GM10248 (cell line): ENCODE measurements at regions of chr17 and their contacts with region 1.

Region 1: GRCh38 chr17:4412933-4413831 is 20.6 kb upstream of the SPNS3 start:
- DNase-seq: peak; percentile 89
- CTCF ChIP-seq: peak; percentile 99

Region 2: GRCh38 chr17:4206962-4207361 is 206.2 kb before region 1 on chr17:
- CTCF ChIA-PET with region 1: interaction called, 248 read pairs
- POLR2A ChIA-PET with region 1: no interaction called
- DNase-seq: no peak
- CTCF ChIP-seq: no peak

Region 3: GRCh38 chr17:4387137-4387536 is 26.0 kb before region 1 on chr17:
- CTCF ChIA-PET with region 1: no interaction called
- POLR2A ChIA-PET with region 1: no interaction called
- DNase-seq: no peak
- CTCF ChIP-seq: no peak

Region 4: DNA sequence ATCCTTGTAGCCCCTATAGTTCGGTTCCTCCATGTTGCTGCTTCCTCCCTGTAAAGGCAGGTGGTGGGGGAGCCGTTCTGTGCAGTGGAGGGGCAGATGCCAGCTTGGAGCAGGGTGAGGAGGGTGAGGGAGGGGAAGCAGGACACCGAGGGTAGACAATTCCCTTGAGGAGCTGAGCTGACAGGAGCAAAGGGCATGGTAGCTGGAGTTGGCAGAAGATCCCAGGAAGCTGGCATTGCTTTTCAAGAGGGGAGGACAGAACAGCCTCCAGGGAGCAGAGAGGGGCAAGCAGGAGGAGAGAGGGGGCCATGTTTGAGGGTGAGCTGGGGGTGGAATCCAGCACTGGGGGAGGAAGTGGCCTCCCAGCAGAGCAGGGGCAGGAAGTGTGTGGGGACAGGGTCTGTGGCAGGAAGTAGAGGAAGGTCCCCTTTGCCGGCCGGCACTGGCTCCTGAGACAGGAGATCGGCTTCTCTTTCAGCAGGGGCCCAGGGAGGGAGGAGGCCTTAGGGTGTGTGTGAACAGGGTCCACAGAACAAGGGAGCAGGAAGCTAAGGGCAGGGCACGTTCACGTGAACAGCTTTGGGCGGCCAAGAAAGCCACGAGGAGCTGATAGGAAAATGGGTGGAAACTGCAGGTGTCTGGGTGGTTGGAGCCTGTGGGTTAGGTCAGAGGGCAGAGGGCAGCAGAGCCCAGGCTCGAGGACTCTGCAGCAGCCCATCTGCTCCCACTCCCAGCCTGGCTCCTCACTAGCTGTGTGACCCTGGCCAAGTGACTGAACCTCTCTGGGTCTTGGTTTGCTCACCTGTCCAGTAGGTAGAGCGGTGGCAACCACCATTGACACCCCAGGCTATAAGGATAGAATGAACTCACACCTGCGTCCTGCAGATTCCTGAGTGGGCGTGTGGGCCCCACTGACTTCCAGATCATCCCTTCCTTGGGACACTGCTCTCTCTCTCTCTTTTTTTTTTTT is 68.0 kb after region 1 on chr17:
- CTCF ChIA-PET with region 1: no interaction called
- POLR2A ChIA-PET with region 1: no interaction called
- DNase-seq: no peak
- CTCF ChIP-seq: no peak